Ascending aorta (tissue), 2 donors: ENCODE measurements at regions of chr1 and their contacts with region 1.

Region 1: DNA sequence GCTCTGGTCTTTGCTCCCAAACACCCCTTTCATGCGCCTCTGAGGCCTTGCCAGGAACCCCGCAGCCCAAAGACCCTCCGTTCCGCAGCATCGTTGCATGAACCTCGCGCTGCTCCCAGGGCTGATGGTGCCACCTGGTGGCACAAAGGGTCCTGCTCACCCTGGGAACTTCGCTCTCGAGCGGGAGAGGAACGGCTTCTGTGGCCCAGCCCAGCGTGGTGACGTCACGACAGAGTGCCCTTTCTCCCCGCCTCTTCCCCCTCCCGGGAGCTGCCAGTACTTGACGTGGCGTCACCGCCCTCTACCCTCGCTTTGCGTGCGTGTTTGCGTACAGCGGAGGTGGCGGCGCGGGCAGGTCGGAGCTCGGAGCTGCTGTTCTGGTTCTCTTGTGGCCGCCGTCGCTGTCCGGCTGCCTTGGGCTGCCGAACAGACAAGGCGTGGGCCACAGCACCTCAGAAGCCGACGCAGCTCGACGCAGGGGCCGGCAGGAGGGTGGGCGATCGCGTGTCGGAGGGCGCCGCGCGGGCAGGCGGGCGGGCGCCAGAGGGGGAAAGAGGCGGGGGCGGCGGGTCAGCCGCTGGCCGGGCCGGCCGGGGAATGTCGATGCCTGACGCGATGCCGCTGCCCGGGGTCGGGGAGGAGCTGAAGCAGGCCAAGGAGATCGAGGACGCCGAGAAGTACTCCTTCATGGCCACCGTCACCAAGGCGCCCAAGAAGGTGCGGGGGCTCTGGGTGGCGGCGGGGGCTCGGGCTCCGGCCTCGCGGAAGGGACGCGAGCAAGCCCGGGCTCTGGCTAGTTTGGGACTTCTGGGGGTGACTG is at the start of gene AHCYL1:
- DNase-seq: peak; percentile 95 to 100
- H3K4me3 ChIP-seq: peak within 1 kb of the TSS; percentile 77 to 81
- H3K27ac ChIP-seq: peak within 1 kb of the TSS; percentile 97 to 98
- H3K4me1 ChIP-seq: peaks cover 10 to 12% of the 10 kb centered on the region in 2 donors
- H3K27me3 ChIP-seq: no peaks in the 10 kb centered on the region
- CTCF ChIP-seq: peak; percentile 98 to 99 (median 98)
- total RNA-seq, gene AHCYL1: 49.1 TPM

Region 2: DNA sequence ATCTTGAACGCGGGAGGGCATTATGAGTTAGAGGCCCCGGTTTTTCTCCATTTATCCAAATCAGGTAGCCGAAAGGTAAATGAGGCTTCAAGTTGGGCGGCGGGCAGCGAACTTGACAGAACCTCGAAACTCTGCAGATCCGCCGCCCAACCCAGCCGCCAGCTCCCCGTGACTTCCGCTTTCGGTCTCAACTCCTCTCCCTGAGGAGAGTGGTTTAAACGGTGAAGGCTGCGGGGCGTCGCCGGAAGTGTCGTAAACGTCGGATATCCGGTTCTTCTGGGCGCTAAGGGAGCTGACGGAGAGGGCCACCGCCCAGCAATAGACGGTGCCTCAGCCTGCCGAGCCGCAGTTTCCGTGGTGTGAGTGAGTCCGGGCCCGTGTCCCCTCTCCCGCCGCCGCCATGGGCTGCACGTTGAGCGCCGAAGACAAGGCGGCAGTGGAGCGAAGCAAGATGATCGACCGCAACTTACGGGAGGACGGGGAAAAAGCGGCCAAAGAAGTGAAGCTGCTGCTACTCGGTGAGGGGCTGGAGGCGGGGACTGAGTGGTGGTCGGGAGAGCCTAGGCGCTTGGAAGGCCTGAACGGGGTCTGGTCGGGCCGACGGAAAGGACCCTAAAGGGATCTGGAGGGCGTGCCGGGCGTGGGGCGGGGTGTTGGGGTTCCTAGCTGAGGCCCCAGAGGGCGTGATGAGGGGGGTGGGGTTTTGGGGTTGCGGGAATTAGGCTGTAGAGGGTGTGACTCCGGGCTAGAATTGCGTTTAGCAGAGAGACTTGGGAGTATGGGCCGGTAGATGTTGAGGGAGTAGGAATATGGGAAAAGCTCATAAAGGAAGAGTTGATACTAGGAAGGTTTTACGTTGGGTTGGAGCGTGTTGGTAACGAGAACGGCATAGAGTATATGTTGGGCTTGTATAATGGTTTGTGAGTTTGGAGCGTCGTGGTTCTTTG is 436.1 kb before region 1 on chr1 and contains the start of gene GNAI3:
- intact Hi-C with region 1: loop called (anchors 2 kb)
- DNase-seq: peak; percentile 91 to 99
- H3K4me3 ChIP-seq: peak within 1 kb of the TSS; percentile 83 to 92
- H3K27ac ChIP-seq: peak within 1 kb of the TSS; percentile 94 to 95
- H3K4me1 ChIP-seq: peaks cover 0 to 23% of the 10 kb centered on the region in 2 donors
- H3K27me3 ChIP-seq: no peaks in the 10 kb centered on the region
- CTCF ChIP-seq: no peak
- total RNA-seq, gene GNAI3: 2.8 TPM

Region 3: DNA sequence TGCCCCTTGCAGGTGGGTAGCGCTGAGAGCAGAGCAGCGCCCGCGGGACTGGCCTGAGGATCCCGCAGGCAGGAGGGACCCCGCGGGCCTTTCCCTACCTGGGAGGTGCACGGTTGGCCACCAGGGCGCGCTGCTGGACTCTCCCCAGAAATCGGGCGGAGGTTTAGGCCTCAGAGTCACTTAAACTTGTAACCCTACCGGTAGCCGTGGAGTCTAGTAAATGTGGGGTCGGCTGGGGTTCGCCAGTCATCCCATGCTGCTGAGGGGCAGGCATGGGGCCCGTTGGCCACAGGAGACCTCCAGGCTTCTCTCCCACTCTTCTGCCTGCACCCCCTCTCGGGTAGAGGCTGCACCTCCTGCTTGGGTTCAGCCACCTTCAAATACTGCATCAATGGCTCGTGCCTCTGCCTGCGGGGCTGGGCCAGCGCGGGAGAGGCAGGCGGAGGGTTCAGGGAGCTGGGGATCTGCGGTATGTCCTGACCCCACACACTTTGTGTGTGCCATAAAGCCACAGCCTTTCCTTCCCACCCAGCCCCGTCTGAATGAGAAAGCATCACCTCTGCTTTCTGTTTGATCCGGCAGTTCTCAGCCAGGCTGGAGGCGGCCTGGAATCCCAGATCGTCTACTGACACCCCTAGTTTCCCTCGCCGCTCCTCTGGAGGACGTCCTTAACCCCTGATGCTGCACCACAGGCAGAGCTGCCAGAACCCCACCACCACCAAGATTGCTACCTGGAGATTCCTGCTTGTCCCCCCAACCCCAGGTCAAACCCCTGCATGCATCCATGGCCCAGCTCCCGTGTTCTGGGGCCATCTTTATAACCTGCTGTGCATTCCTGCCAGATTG is 341.1 kb before region 1 on chr1:
- intact Hi-C with region 1: loop called (anchors 5 kb)
- DNase-seq: peak in 1 of 2 donors; percentile 90
- H3K4me3 ChIP-seq: no peak overlapping the region
- H3K27ac ChIP-seq: no peak overlapping the region
- H3K4me1 ChIP-seq: no peaks in the 10 kb centered on the region
- H3K27me3 ChIP-seq: no peaks in the 10 kb centered on the region
- CTCF ChIP-seq: peak; percentile 81 to 87 (median 81)

Region 4: DNA sequence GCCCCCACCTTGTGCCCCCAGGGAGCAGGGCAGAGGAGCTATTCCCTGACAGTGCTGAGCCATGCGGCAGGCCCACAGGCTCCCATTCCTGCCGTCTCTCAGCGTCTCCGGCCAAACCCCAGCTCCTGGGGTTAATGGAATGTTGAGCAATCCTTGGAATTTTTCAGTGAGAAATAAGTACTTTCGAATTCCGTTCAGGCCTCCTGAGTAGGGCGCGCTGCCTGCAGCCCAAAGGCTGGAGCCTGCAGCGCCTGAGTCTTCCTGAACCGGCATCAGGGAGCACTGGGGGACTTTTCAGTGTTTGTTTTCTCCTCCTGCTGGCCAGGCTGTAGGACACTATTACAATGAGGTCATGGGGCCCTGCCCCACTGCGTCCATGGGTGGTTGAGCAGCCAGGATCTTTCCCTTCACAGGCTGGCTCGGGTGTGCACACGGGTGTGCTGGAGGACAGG is 107.3 kb before region 1 on chr1:
- intact Hi-C with region 1: loop called (anchors 1 kb)
- DNase-seq: peak in 1 of 2 donors; percentile 89
- H3K4me3 ChIP-seq: peak overlapping the region in 1 of 2 donors; percentile 42
- H3K27ac ChIP-seq: peak overlapping the region; percentile 93 to 94
- H3K4me1 ChIP-seq: peaks cover 11 to 37% of the 10 kb centered on the region in 2 donors
- H3K27me3 ChIP-seq: no peaks in the 10 kb centered on the region
- CTCF ChIP-seq: peak; percentile 30 to 46 (median 37)

Region 5: DNA sequence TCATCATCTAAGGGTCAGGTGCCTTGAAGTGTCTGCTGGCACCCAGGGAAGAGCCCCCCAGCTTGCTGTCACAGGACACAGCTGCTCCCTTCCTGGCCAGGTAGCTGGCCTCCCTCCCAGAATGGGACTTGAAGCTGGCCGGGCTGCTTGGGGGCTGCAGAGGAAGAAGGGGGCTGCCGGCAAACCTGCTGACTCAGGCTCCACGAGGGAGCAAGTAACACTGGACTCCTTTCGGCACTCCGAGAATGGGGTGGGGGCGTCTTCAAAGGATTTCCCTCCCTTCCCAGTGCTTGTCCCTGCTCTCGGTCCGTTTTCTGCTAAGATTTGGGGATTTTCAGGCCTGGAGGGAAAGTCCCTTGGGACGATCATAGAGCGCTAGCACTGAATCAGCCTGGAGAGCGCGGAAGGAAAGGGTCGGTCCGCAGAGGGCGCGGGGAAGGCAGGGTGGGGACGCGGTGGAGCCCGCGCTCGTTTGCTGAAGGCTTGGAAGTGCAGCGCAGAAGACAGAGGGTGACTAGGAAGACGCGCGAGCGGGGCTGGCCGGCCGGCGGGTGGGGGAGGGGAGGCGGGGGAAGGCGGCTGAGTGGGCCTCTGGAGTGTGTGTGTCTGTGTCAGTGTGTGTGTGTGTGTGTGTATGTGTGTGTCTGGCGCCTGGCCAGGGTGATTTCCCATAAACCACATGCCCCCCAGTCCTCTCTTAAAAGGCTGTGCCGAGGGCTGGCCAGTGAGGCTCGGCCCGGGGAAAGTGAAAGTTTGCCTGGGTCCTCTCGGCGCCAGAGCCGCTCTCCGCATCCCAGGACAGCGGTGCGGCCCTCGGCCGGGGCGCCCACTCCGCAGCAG is 74.3 kb before region 1 on chr1 and contains the start of gene CSF1:
- intact Hi-C with region 1: loop called (anchors 2 kb)
- DNase-seq: peak; percentile 55 to 88
- H3K4me3 ChIP-seq: peak within 1 kb of the TSS; percentile 64 to 82
- H3K27ac ChIP-seq: peak within 1 kb of the TSS; percentile 77 to 84
- H3K4me1 ChIP-seq: peaks cover 5 to 40% of the 10 kb centered on the region in 2 donors
- H3K27me3 ChIP-seq: no peaks in the 10 kb centered on the region
- CTCF ChIP-seq: no peak
- total RNA-seq, gene CSF1: 140 TPM

Region 6: GRCh38 chr1:110982320-110982719 is 997.7 kb after region 1 on chr1:
- intact Hi-C with region 1: no loop called
- DNase-seq: no peak
- H3K4me3 ChIP-seq: no peak overlapping the region
- H3K27ac ChIP-seq: no peak overlapping the region
- H3K4me1 ChIP-seq: no peaks in the 10 kb centered on the region
- H3K27me3 ChIP-seq: no peaks in the 10 kb centered on the region
- CTCF ChIP-seq: no peak